ENCODE measurements at regions of chr17 and their contacts with region 1.

Region 1: GRCh38 chr17:30378824-30379302 is at the start of gene CPD:
- DNase-seq: peak; percentile 98
- ATAC-seq: peak; percentile 87
- H3K4me3 Mint-ChIP-seq: peak within 1 kb of the TSS; percentile 82
- H3K27ac Mint-ChIP-seq: peak within 1 kb of the TSS; percentile 80
- H3K4me1 Mint-ChIP-seq: peaks cover 63% of the 10 kb centered on the region
- H3K27me3 Mint-ChIP-seq: no peaks in the 10 kb centered on the region
- total RNA-seq, gene CPD: 29.0 to 36.3 TPM

Region 2: DNA sequence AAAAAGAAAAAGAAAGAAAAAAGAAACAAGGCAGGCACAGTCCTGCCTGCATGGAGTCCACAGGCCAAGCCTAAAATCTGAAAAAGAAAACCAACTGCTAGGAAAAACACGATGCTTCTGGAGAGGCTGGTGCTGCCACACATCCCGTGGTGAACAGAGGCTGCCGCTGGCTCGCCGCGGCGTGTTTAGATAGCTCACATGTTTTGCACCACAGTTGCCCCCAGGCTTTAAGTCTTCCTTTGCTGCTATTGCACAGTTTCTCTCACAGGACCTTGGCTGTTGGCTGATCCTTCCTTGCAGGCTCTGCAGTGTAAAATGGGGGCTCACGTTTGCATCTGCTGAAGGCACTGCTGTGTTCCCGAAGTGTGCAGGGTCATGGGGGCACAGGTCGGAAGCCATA is 152.0 kb before region 1 on chr17:
- CTCF ChIA-PET with region 1: no interaction called
- POLR2A ChIA-PET with region 1: no interaction called
- intact Hi-C with region 1: no loop called
- DNase-seq: no peak
- ATAC-seq: no peak
- H3K4me3 Mint-ChIP-seq: no peak overlapping the region
- H3K27ac Mint-ChIP-seq: no peak overlapping the region
- H3K4me1 Mint-ChIP-seq: no peaks in the 10 kb centered on the region
- H3K27me3 Mint-ChIP-seq: peaks cover 11% of the 10 kb centered on the region

Region 3: GRCh38 chr17:30413109-30413508 is 34.2 kb after region 1 on chr17:
- CTCF ChIA-PET with region 1: no interaction called
- POLR2A ChIA-PET with region 1: no interaction called
- intact Hi-C with region 1: loop called (anchors 1 to 2 kb)
- DNase-seq: no peak
- ATAC-seq: peak; percentile 97
- H3K4me3 Mint-ChIP-seq: no peak overlapping the region
- H3K27ac Mint-ChIP-seq: peak overlapping the region; percentile 84
- H3K4me1 Mint-ChIP-seq: peaks cover 53% of the 10 kb centered on the region
- H3K27me3 Mint-ChIP-seq: no peaks in the 10 kb centered on the region